ENCODE measurements at regions of chr22 and their contacts with region 1.

Region 1: GRCh38 chr22:36277482-36278291 is 24.8 kb downstream of the APOL1 start:
- H3K4me3 ChIP-seq: no peak overlapping the region
- H3K27ac ChIP-seq: no peak overlapping the region; the same call in 1 of the 2 replicates
- H3K4me1 ChIP-seq: no peaks in the 10 kb centered on the region
- CTCF ChIP-seq: peak; percentile 54

Region 2: DNA sequence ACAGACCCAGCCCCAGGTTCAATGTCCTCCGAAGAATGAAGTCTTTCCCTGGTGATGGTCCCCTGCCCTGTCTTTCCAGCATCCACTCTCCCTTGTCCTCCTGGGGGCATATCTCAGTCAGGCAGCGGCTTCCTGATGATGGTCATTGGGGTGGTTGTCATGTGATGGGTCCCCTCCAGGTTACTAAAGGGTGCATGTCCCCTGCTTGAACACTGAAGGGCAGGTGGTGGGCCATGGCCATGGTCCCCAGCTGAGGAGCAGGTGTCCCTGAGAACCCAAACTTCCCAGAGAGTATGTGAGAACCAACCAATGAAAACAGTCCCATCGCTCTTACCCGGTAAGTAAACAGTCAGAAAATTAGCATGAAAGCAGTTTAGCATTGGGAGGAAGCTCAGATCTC is 10.6 kb before region 1 on chr22:
- CTCF ChIA-PET with region 1: interaction called, 13 read pairs
- POLR2A ChIA-PET with region 1: interaction called, 3 read pairs
- H3K4me3 ChIP-seq: no peak overlapping the region
- H3K27ac ChIP-seq: no peak overlapping the region
- H3K4me1 ChIP-seq: no peaks in the 10 kb centered on the region
- CTCF ChIP-seq: no peak

Region 3: DNA sequence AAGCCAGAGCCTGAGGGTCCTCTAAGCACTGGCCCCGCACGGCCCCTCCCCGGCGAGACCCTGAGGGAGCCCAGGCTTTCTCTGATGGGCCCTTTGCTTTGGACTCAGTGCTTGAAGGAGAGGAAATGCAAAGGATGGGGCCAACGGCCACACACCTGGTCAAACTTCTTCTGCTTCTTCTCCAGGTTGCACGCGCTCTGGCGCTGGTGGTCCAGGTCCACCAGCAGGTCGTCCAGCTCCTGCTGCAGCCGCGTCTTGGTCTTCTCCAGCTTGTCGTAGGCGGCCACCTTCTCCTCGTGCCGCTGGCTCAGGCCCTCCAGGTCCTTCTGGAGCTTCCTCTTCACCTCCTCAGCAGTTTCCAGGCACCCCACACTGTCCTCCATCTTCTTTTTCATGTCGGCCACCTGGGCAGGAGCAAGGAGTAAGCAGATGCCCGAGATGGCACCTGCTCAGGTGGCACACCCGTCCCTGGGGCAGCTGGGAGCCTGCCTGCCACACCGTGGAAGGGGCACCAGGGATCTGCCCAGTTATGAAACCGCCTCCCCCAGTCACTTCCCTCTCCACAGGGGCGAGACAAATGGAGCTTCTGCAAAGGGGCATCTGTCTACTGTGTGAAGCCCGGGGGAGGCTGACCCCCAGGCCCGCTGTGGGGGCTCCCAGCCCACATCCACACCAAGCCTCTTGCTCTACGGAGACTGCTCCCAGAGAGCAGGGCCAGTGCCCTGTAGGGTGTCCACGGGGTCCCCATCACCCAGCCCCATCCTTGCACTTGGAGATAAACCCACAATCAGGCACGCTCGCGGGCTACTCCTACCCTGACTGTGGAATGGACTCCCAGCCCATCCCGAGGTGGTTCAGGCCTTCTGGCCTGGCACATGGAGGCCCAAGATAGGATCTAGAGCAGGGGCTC is 14.4 kb after region 1 on chr22:
- CTCF ChIA-PET with region 1: interaction called, 38 read pairs
- POLR2A ChIA-PET with region 1: interaction called, 4 read pairs
- H3K4me3 ChIP-seq: no peak overlapping the region
- H3K27ac ChIP-seq: no peak overlapping the region
- H3K4me1 ChIP-seq: no peaks in the 10 kb centered on the region
- CTCF ChIP-seq: no peak

Region 4: DNA sequence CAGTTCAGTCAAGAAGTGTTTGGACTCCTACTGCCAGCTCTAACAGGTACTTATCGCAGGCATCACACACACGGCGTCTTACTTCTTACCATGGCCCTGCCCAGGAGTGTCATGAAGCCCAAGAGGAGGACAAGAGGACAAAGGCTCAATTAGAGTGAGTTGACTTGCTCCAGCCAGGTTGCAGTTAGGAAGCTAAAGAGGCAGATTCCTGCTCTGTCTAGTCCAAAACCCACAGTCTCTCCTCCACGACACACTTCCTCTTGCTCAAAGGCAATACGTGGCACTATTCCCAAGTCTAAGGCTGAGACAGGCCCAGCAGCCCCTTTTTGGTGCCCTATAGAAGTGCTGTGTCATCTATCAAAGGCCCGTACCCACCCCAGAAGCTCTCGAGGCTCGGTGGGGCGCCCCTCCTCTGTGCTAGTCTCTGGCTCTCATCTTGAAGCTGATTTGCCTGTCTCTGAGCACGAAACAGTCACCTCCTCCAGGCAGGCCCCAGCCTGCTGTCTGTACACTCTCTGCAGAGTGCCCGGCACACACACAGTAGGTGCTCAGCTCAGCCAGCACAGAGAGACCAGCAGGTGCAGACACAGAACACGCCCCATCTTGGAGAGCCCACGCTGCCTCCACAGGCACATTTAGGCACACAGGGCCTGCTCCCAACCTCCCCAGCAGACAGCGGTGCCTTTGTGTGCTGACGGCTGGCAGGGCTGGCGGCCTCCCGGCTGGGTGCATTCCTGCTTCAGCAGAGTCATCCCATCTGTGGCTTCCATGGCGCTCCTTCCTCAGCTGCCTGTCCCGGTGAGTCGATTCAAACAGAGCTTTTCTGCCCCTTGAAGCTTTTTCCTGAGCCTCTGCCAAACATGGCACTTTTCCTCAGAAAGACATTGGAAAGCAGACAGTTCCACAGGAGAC is 57.3 kb after region 1 on chr22:
- CTCF ChIA-PET with region 1: no interaction called
- POLR2A ChIA-PET with region 1: no interaction called
- H3K4me3 ChIP-seq: no peak overlapping the region
- H3K27ac ChIP-seq: peak overlapping the region; percentile 26; the same call in 1 of the 2 replicates
- H3K4me1 ChIP-seq: peaks cover 30% of the 10 kb centered on the region
- CTCF ChIP-seq: no peak

Region 5: DNA sequence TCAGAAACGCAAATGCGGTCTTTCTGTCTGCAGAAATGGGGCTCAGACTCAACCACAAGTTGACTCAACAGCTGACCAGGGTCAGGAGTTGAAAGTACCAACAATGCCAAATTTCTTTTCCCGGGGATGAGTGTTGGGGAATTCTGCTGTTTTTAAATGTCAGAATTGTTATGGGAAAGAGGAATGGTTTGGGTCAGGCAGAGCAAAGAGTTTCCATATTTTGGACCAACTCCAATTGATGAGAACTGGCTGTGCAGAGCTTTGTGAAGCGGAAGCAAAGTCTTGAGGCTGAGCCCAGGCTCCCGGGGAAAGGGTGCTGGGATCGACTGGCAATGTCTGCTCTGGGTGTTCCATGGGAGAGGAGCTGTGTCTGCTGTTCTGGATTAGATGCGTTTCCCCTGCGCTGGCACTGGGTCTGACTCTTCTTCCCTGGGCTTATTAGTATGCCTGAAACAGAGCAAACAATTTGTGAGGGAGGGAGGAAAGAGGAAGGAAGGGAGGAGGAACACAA is 167.5 kb after region 1 on chr22:
- CTCF ChIA-PET with region 1: no interaction called
- POLR2A ChIA-PET with region 1: no interaction called
- H3K4me3 ChIP-seq: no peak overlapping the region
- H3K27ac ChIP-seq: no peak overlapping the region
- H3K4me1 ChIP-seq: no peaks in the 10 kb centered on the region
- CTCF ChIP-seq: no peak